IMR-90 (cell line): ENCODE measurements at regions of chr15 and their contacts with region 1.

Region 1: DNA sequence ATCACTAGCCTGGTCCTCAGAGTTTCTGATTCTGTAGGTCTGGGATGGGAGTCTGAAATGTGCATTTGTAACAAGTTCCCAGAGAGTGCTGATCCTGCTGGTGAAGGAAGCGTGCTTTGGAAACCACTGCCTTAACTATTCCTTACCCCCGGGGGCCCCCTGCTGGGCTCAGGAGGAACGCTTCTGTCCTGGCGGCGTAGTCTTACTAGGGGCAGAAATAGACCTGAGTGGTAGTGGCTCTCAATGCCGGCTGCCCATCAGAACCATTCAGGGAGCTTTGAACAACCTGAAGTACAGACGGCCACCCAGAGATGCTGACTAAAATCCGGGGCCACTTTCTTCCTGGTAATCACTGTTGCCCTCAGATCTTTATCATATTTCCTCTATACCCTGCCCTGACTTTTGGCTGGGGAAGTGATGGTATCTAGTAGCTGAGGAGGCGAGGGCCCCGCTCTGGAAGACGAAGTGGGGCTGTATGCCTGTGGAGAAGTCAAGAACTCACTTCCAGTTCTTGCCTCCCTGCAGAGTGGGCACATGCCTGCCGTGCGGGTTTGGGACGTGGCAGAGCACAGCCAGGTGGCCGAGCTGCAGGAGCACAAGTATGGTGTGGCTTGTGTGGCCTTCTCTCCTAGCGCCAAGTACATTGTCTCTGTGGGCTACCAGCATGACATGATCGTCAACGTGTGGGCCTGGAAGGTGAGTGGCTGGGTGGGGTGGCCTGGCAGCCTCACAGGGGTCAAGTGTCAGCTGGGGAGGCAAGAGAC is 16.3 kb upstream of the JMJD7 start:
- DNase-seq: peak; percentile 81
- ATAC-seq: peak; percentile 100
- H3K4me3 ChIP-seq: no peak overlapping the region
- H3K27ac ChIP-seq: no peak overlapping the region
- H3K4me1 ChIP-seq: peaks cover 3% of the 10 kb centered on the region
- H3K27me3 ChIP-seq: no peaks in the 10 kb centered on the region
- CTCF ChIP-seq: peak; percentile 97
- POLR2A ChIP-seq: peak; percentile 62
- RAD21 ChIP-seq: peak; percentile 99

Region 2: DNA sequence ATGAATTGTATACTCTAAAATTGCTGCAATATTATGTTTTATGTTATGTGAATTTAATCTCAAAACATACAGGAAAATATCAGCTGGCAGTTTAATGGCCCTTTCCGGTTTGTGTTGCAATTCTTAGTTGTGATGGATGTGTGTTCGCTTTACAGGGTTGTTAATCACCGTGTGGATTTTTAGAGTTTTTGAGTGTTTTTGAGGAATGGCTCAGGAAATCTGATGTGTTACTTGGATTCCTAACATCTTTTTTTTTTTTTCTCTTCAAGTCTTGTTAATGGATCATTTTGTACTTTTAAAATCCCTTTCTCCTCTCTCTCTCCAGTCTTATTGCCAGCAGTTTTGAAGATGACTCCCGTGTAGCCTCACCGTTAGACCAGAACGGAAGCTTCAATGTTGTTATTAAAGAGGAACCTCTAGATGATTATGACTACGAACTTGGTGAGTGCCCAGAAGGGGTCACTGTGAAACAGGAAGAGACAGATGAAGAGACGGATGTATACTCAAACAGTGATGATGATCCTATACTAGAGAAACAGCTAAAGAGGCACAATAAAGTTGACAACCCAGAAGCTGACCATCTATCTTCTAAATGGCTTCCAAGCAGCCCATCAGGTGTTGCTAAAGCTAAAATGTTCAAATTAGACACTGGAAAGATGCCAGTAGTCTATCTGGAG is 115.7 kb before region 1 on chr15:
- CTCF ChIA-PET with region 1: no interaction called
- POLR2A ChIA-PET with region 1: no interaction called
- dilution Hi-C with region 1: no loop called
- in situ Hi-C with region 1: no loop called
- intact Hi-C with region 1: loop called (anchors 5 kb)
- DNase-seq: peak; percentile 73
- ATAC-seq: peak; percentile 75
- H3K4me3 ChIP-seq: peak overlapping the region; percentile 6; the same call in 1 of the 2 replicates
- H3K27ac ChIP-seq: no peak overlapping the region
- H3K4me1 ChIP-seq: no peaks in the 10 kb centered on the region; the same call in 1 of the 2 replicates
- H3K27me3 ChIP-seq: no peaks in the 10 kb centered on the region
- CTCF ChIP-seq: peak; percentile 56
- POLR2A ChIP-seq: no peak
- RAD21 ChIP-seq: peak; percentile 58